GM13976 (cell line): ENCODE measurements at regions of chr4 and their contacts with region 1.

Region 1: GRCh38 chr4:137819964-137820383 is 287.7 kb upstream of the PCDH18 start:
- DNase-seq: peak; percentile 10
- CTCF ChIP-seq: peak; percentile 44

Region 2: DNA sequence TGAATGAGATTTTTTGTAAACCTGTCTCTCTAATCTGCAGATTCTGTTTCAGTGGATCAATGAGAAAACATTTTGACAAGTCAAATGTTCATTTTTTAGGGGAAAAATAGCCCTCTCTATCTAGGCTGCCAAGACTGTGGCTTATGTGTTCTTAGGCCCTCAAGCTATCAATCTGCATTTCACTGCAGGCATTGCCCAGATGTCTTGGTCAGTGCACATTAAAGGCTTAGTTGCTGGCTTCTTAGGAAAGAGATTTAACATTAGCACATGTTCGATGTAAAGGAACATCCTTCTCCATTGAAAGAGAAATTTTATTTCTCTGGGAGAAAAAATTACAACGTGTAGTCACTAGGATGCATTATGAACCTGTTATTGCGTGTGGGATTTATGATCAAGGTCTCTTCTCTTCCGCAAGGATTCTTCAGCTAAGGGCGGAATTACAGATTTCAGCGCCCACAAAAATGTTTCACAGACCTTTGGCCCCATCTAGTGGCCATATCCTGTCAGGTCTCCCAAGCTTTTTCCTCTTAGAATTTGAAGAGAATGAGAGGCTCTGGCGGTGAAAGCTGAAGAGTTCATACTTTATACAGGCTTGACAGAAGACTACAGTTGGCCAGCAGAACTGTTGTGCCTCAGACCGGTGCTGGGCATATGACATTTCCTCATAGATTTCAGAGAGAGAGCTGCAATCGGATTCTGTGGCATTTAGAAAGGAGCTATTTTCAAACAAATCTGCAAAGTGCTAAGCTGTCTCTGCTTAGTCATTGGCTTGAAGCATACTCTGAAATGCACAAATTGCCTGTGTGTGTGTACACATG is 1051.0 kb after region 1 on chr4:
- in situ Hi-C with region 1: loop called (anchors 25 kb)
- DNase-seq: peak; percentile 68
- CTCF ChIP-seq: peak; percentile 82